ENCODE measurements at regions of chr13 and their contacts with region 1.

Region 1: DNA sequence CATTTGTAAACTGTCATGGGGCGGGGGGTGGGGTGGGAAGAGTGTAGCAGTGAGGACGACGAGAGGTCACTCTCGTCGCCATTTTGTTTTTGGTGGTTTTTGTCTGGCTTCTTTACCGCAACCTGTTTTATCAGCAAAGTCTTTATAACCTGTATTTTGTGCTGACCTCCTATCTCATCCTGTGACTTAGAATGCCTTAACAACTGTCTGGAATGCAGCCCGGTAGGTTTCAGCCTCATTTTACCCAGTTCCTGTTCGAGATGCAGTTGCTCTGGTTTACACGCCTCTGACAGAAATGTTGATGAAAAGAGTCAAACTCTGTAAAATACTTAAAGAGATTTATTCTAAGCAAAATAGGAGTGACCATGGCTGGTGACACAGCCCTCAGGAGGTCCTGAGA is 852.0 kb downstream of the DACH1 start:
- DNase-seq: peak; percentile 80 to 88
- H3K4me3 ChIP-seq: peak overlapping the region; percentile 46
- H3K4me3 Mint-ChIP-seq: peak overlapping the region; percentile 79
- H3K27ac Mint-ChIP-seq: peak overlapping the region; percentile 98
- H3K4me1 ChIP-seq: peaks cover 27% of the 10 kb centered on the region
- H3K4me1 Mint-ChIP-seq: peaks cover 28% of the 10 kb centered on the region
- H3K27me3 ChIP-seq: no peaks in the 10 kb centered on the region
- H3K27me3 Mint-ChIP-seq: no peaks in the 10 kb centered on the region
- CTCF ChIP-seq: no peak

Region 2: DNA sequence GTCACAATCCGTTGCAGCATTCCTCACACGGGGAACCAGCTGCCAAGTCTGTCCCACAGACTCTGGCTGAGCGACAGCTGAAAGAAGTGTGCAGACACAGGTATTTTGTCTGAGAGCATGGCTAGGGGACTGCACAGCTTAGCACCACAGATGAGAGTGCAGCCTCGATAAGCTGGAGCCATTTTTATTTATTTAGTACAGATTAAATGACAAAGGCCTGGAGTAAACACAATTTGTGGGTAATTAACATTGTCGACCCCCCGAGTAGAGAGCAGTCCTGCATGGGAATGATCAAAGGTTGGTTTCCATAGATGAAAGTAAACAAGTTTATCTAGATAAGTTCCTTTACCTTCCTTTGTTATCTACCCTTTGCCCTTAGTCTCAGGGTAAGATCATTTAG is 15.8 kb after region 1 on chr13:
- CTCF ChIA-PET with region 1: no interaction called
- POLR2A ChIA-PET with region 1: interaction called, 4 read pairs
- intact Hi-C with region 1: loop called (anchors 1 kb)
- DNase-seq: peak; percentile 72 to 84
- H3K4me3 ChIP-seq: no peak overlapping the region
- H3K4me3 Mint-ChIP-seq: peak overlapping the region; percentile 60
- H3K27ac Mint-ChIP-seq: peak overlapping the region; percentile 87
- H3K4me1 ChIP-seq: peaks cover 28% of the 10 kb centered on the region
- H3K4me1 Mint-ChIP-seq: peaks cover 19% of the 10 kb centered on the region
- H3K27me3 ChIP-seq: no peaks in the 10 kb centered on the region
- H3K27me3 Mint-ChIP-seq: no peaks in the 10 kb centered on the region
- CTCF ChIP-seq: no peak

Region 3: DNA sequence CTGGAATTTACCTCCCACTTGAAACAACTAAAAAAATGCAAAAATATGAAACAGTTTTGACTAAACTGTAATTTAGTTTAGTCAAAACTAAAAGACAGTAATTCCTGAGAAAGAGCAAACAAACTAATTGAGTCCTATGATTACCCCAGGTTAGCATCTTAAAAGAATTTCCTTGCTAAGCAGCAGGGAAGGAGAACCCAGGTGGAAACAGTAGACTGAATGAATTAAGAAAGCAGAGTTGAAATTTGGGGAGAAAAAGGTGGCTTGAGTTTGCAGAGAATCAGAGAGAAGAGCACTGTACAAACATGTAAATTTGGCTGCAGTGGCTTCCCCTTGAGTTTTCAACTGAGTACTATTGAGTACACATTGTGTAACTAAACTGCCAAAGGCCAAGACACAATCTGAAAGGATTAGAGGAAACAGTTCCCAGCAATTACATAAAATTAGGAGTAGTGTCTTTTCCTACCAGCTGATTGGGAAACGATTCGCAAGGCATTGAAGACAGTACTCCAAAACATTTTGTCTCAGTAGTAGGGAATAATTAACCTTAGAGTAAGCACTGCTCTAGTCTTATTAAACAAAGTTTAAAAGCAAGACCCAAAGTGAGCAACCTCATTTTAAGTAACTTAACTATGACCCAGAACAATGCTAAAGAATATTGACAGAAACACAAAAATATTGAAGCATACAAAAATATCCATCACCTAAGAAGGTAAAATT is 31.5 kb after region 1 on chr13:
- CTCF ChIA-PET with region 1: no interaction called
- POLR2A ChIA-PET with region 1: interaction called, 3 read pairs
- intact Hi-C with region 1: loop called (anchors 2 kb)
- DNase-seq: no peak
- H3K4me3 ChIP-seq: no peak overlapping the region
- H3K4me3 Mint-ChIP-seq: no peak overlapping the region
- H3K27ac Mint-ChIP-seq: no peak overlapping the region
- H3K4me1 ChIP-seq: peaks cover 20% of the 10 kb centered on the region
- H3K4me1 Mint-ChIP-seq: peaks cover 22% of the 10 kb centered on the region
- H3K27me3 ChIP-seq: no peaks in the 10 kb centered on the region
- H3K27me3 Mint-ChIP-seq: no peaks in the 10 kb centered on the region
- CTCF ChIP-seq: no peak

Region 4: DNA sequence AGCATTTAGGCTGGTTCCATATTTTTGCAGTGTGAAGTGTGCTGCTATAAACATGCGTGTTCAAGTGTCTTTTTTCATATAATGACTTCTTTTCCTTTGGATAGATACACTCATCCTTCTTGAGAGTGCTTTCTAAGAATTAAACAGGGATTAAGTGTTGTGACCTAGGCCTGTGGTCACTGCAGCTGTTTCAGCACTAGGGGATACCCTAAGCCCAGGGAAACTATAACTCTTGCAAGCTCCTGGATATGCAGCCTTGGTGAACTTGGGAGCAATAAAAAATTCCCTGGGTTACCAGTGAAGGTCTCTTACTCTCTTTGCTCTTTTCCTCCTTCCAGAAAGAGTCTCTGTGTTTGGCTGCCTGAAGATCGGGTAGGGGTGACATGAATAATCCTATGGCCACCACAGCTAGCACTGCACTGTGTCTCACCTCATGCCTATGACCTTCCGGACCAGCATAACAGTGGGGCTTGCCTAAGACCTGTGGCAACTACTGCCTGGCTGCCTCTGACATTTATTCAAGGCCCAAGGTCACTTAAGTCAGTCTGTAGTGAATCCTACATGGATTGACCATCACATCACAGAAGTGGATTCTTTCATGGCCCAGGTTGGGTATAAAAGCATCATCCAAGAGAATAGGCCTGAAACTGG is 52.3 kb after region 1 on chr13:
- CTCF ChIA-PET with region 1: no interaction called
- POLR2A ChIA-PET with region 1: no interaction called
- intact Hi-C with region 1: loop called (anchors 2 kb)
- DNase-seq: peak in 1 of 2 experiments; percentile 28
- H3K4me3 ChIP-seq: no peak overlapping the region
- H3K4me3 Mint-ChIP-seq: no peak overlapping the region
- H3K27ac Mint-ChIP-seq: no peak overlapping the region
- H3K4me1 ChIP-seq: peaks cover 11% of the 10 kb centered on the region
- H3K4me1 Mint-ChIP-seq: no peaks in the 10 kb centered on the region
- H3K27me3 ChIP-seq: no peaks in the 10 kb centered on the region
- H3K27me3 Mint-ChIP-seq: no peaks in the 10 kb centered on the region
- CTCF ChIP-seq: peak in 1 of 2 experiments; percentile 46